Calu3 (cell line): ENCODE measurements at regions of chr15 and their contacts with region 1.

Region 1: DNA sequence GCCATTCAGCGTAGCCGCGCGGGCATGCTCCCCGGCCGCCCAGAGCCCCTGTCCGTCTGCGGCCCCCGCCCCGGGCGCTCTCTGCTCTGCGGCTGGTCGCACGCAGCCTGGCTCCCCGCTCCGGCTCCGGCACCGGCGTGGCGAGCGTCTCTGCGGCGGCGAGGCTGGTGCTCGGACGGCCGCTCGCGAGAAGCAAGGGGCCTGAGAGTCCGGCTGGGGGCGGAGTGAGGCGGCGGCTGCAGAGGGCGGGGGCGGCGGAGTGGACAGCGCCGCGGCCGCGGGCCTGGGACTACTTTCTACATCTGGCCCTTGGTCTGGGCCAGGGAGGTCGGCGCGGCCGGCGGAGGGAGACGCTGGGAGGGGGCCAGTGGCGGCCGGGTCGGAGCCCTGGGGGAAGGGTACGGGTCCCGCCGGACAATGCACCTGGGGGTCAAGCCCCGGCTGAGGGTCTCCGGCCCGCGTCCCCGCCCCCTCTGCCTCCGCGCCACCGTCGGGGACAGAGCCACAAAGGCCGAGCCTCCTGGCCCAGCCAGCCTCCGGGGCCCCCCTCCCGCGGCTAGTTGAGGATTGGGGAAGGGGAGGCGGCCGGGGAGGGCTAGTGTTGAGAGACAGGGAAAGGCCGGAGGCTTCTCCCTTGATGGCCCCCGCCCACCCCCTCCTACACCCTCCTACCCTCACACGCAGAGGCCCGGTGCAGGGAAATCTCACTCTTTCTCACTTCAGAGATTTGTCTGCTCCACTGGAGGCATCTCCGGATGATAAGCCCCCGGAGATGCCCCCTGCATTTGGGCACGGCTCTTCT is at the start of gene PRTG:
- DNase-seq: peak; percentile 86
- H3K4me3 Mint-ChIP-seq: no peak within 1 kb of the TSS
- H3K27ac Mint-ChIP-seq: peak within 1 kb of the TSS; percentile 81
- H3K4me1 Mint-ChIP-seq: peaks cover 8% of the 10 kb centered on the region
- H3K27me3 Mint-ChIP-seq: peaks cover 2% of the 10 kb centered on the region
- CTCF ChIP-seq: no peak
- total RNA-seq, gene PRTG: 6.6 and 12.0 TPM in 2 replicates

Region 2: DNA sequence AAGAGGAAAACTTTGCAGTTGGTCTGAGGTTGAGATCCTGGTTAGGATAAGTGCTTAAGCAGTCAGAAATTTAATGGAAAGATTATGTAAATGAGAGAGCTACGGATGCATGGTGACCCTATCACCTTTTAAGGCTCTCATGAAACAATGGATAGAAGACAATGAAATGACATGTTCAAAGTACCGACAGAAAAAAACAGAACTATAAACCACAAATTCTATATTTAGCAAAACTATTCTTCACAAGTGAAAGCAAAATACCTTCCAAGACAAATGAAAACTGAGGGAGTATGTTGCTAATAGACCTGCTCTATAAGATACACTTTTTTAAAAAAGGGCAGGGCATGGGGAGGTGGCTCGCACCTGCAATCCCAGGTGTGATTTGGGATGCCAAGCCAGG is 267.3 kb before region 1 on chr15:
- CTCF ChIA-PET with region 1: no interaction called
- intact Hi-C with region 1: no loop called
- DNase-seq: no peak
- H3K4me3 Mint-ChIP-seq: no peak overlapping the region
- H3K27ac Mint-ChIP-seq: no peak overlapping the region
- H3K4me1 Mint-ChIP-seq: peaks cover 10% of the 10 kb centered on the region
- H3K27me3 Mint-ChIP-seq: no peaks in the 10 kb centered on the region
- CTCF ChIP-seq: no peak

Region 3: GRCh38 chr15:55799291-55800212 is 56.4 kb after region 1 on chr15:
- CTCF ChIA-PET with region 1: no interaction called
- intact Hi-C with region 1: loop called (anchors 5 kb)
- DNase-seq: peak; percentile 82
- H3K4me3 Mint-ChIP-seq: no peak overlapping the region
- H3K27ac Mint-ChIP-seq: peak overlapping the region; percentile 47
- H3K4me1 Mint-ChIP-seq: peaks cover 18% of the 10 kb centered on the region
- H3K27me3 Mint-ChIP-seq: no peaks in the 10 kb centered on the region
- CTCF ChIP-seq: peak; percentile 77

Region 4: DNA sequence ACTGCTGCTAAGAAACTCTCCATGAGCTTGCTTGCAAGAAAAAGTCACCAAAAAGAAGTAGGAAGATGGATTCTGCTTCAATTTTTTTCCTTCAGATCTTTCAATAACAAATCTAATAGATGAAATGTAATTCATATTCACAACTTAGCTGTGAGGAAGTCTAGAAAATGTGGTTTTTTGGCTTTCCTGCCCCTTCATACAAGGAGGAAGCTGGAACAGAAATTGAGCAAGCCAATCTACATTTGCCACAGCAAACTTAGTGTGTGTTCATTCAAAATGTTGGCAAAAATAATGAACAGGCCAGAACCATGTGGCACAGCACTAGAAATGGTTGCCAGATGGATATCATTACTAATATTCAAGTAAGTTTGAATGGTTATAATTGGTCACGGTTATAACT is 343.4 kb after region 1 on chr15:
- CTCF ChIA-PET with region 1: no interaction called
- intact Hi-C with region 1: no loop called
- DNase-seq: no peak
- H3K4me3 Mint-ChIP-seq: no peak overlapping the region
- H3K27ac Mint-ChIP-seq: no peak overlapping the region
- H3K4me1 Mint-ChIP-seq: peaks cover 20% of the 10 kb centered on the region
- H3K27me3 Mint-ChIP-seq: no peaks in the 10 kb centered on the region
- CTCF ChIP-seq: no peak